Activated naive CD4-positive, alpha-beta T cell treated with anti-CD3 and anti-CD28 coated beads for 36 hours (primary cell): ENCODE measurements at regions of chr4 and their contacts with region 1.

Region 1: DNA sequence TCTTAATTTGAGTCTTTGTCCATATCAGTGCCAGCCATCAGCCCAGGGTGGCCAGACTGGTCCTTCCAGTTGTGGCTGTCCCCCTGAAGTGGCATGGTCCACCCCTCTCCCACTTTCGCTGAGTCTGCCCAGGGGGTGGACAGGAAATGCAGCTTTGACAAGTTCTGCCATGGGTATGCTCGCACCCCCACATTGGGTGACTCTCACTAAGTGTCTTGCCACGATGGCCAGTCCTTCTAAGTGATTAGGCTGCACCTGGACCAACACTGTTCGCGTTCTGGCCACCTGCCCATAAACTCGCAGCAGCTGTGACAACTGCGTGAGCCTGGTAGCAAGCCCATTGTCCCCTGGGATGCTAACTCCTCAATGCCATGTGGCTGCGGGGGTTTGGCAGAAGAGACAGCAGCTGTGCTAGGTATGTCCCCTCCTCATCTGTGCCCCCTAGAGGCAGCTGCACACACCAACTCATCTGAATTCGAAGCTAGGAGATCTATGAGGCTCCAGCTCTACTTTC is 10.0 kb upstream of the LNX1 start:
- DNase-seq: no peak
- H3K4me3 Mint-ChIP-seq: no peak overlapping the region
- H3K27ac Mint-ChIP-seq: no peak overlapping the region
- H3K4me1 Mint-ChIP-seq: no peaks in the 10 kb centered on the region
- H3K27me3 Mint-ChIP-seq: peaks cover 30% of the 10 kb centered on the region

Region 2: DNA sequence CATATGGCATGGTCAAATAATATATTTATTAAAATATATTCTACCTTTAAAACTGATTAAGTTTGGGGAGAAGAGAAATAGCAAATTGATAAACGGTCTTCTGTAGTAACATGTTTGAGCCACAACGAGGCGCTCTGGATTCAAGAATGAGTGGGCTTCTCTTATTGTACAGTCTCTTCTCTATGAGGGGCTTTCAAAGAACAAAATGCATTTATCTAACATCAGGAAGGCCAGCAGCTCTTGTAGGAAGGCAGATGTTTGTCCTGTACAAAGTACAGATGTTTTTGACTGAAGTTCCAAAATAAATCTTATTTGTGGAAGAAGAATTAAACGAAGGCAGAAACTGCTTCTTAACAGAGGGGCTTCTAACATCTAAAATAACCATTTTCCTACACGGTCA is 585.6 kb before region 1 on chr4:
- CTCF ChIA-PET with region 1: no interaction called
- intact Hi-C with region 1: loop called (anchors 10 kb)
- DNase-seq: peak; percentile 49
- H3K4me3 Mint-ChIP-seq: no peak overlapping the region
- H3K27ac Mint-ChIP-seq: no peak overlapping the region
- H3K4me1 Mint-ChIP-seq: peaks cover 36% of the 10 kb centered on the region
- H3K27me3 Mint-ChIP-seq: no peaks in the 10 kb centered on the region